Aorta (tissue), 5 donors: ENCODE measurements at regions of chr1 and their contacts with region 1.

Region 1: DNA sequence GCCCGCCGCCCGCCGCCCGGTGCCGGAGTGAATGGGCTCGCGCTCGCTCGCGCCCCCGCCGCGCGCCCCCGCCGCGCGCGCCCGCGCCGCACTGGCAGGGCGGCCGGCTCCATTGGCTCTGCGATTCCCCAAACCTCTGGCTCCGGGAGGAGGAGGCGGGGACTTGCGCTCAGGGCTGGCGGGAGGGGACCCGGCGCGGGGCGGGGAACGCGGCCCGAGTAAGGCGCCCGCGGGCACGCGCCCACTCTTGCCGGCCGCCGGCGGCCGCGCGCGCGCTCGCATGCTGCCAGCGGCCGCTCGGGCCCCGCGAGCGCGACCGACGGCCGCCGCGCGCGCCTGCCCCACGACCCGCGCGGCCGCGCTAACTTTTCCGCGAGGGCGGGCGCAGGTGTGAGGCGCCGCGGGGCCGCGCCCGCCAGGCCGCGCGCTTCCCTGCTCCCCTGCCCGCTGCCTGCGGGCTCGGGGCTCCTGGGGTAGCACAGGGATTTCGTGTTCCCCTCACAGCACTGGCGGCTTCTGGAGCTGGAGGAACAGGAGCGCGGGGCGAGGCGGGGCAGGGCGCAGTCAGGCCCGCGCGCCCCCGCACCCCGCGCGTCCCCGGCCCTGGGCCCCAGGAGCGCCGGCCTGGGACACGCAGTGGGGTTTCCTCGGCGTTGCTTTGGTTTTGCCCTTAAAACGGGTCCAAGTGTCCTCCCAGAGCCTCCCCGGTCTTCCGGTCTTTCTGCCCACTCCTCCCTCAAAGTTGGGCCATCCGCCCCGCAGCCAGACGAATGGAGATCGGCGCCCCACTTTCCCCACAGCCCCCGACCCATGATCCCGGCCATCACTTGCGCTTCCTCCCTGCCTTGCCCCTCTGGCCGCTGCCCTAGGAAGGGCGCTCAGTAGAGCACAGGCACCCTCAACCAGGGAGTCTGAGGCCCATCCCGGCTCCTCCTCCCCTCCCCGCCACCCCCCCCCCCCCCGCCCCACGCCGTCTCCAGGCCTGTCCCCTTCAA is 101.5 kb downstream of the CASZ1 start:
- DNase-seq: peak; percentile 95 to 97
- ATAC-seq: peak; percentile 85
- H3K4me3 ChIP-seq: peak overlapping the region; percentile 54 to 79
- H3K27ac ChIP-seq: peak overlapping the region in 1 of 2 donors; percentile 63
- H3K4me1 ChIP-seq: no peaks in the 10 kb centered on the region
- H3K27me3 ChIP-seq: no peaks in the 10 kb centered on the region

Region 2: GRCh38 chr1:9588551-9589143 is 1106.3 kb before region 1 on chr1 and contains the start of gene TMEM201:
- intact Hi-C with region 1: loop called in 1 of 2 experiments (anchors 10 kb)
- DNase-seq: peak; percentile 96 to 97
- ATAC-seq: peak; percentile 97
- H3K4me3 ChIP-seq: peak within 1 kb of the TSS; percentile 80 to 87
- H3K27ac ChIP-seq: no peak within 1 kb of the TSS
- H3K4me1 ChIP-seq: no peaks in the 10 kb centered on the region
- H3K27me3 ChIP-seq: no peaks in the 10 kb centered on the region
- total RNA-seq, gene TMEM201: 5.1 to 9.4 TPM

Region 3: DNA sequence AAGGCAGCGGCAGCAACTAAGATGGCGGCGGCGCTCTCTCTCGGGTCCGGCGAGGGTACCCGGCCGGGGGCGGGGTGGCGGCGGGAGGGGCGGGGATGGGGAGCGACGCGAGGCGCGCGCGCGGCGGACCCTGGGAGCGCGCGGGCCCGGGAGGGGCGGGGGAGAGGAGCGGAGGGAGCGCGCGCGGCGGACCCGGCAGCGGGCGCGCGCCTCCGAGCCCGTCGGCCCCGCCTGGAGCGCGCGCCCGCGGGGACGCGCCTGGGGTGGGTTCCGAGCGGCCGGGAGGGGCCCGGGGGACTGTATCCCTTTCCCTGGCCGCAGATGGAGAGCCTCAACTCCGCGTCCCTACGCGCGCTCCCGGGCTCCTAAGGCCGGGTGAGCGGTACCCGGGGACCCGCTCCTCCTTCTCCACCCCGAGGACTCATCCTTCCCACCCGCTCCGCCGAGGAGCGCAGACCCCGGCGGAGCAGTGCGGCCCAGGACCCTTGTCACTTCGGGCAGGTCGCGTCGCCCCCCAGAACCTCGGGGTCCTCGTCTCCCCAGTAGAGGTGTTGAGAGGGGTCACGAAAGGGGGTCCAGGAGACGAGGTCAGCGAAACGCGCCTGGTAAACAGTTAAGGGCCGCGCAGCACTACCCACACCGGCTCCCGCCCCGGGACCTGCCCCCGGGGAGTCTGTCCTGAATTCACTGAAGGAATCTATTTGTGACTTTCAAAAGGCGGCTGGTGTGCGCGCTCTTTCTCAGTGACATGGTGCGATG is 870.8 kb before region 1 on chr1 and contains the start of gene CLSTN1:
- intact Hi-C with region 1: loop called in 1 of 2 experiments (anchors 10 kb)
- DNase-seq: peak; percentile 94 to 98
- ATAC-seq: peak; percentile 89
- H3K4me3 ChIP-seq: peak within 1 kb of the TSS; percentile 81 to 97
- H3K27ac ChIP-seq: peak within 1 kb of the TSS; percentile 69 to 82
- H3K4me1 ChIP-seq: no peaks in the 10 kb centered on the region
- H3K27me3 ChIP-seq: peaks cover 0 to 2% of the 10 kb centered on the region in 2 donors
- total RNA-seq, gene CLSTN1: 85.3 to 113 TPM

Region 4: GRCh38 chr1:10528066-10529014 is 166.6 kb before region 1 on chr1:
- intact Hi-C with region 1: loop called in 1 of 2 experiments (anchors 10 kb)
- DNase-seq: peak; percentile 78 to 91
- ATAC-seq: peak; percentile 80
- H3K4me3 ChIP-seq: no peak overlapping the region
- H3K27ac ChIP-seq: peak overlapping the region; percentile 67 to 98
- H3K4me1 ChIP-seq: peaks cover 0 to 2% of the 10 kb centered on the region in 2 donors
- H3K27me3 ChIP-seq: no peaks in the 10 kb centered on the region

Region 5: DNA sequence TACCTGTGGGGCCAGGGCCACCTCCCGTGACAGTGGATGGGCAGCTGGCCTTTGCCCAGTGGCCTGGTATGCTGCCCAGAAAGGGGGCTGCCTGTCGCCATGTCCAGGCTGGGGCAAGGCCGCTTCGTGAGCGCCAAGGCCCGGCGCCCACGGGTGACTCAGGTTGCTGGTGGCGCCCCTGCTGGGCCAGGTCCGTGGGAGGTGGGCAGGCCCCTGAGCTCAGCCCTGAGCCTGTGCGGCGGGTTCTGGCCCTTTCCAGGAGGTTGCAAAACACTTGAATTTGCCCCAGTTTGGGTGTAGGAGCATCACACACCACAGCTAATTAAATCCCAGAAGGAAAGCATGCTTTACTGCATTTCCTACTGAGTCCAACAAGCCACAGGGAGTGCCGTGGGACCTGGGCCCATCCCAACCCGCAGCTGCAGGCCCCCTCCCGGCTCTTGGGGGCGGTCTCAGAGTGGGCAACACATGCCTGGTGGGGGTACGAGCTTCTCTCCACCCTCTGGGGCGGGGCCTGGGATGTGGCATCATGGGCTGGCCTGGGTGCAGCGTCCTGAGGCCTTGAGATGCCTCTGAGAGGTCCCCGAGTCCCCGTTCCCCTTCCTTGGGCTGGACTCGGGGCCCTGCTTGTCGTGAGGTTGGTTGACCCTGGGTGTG is 60.4 kb before region 1 on chr1:
- intact Hi-C with region 1: loop called in 1 of 2 experiments (anchors 5 kb)
- DNase-seq: peak in 1 of 2 donors; percentile 70
- ATAC-seq: peak; percentile 56
- H3K4me3 ChIP-seq: no peak overlapping the region
- H3K27ac ChIP-seq: peak overlapping the region; percentile 47 to 81
- H3K4me1 ChIP-seq: no peaks in the 10 kb centered on the region
- H3K27me3 ChIP-seq: no peaks in the 10 kb centered on the region

Region 6: DNA sequence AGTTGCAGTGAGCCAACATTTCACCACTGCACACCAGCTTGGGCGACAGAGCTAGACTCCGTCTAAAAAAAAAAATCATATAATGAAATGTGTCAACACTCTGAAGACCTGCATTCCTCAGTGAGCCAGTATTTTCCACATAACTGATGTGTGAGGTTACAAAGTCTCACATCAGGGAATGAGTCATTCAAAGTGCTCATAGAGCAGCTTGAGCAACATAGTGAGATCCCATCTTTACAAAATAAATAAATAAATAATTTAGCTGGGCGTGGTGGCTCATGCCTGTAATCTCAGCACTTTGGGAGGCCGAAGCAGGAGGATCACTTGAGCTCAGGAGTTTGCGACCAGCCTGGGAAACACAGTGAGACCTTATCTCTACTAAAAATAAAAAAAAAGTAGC is 36.1 kb after region 1 on chr1:
- intact Hi-C with region 1: no loop called
- DNase-seq: no peak
- ATAC-seq: no peak
- H3K4me3 ChIP-seq: no peak overlapping the region
- H3K27ac ChIP-seq: no peak overlapping the region
- H3K4me1 ChIP-seq: no peaks in the 10 kb centered on the region
- H3K27me3 ChIP-seq: no peaks in the 10 kb centered on the region